ENCODE measurements at regions of chr18 and their contacts with region 1.

Region 1: GRCh38 chr18:24514439-24514838 is 54.0 kb downstream of the HRH4 start:
- DNase-seq: peak; percentile 44
- CTCF ChIP-seq: peak; percentile 50

Region 2: GRCh38 chr18:24502644-24503523 is 11.6 kb before region 1 on chr18:
- CTCF ChIA-PET with region 1: interaction called, 33 read pairs
- POLR2A ChIA-PET with region 1: no interaction called
- DNase-seq: no peak
- CTCF ChIP-seq: no peak

Region 3: DNA sequence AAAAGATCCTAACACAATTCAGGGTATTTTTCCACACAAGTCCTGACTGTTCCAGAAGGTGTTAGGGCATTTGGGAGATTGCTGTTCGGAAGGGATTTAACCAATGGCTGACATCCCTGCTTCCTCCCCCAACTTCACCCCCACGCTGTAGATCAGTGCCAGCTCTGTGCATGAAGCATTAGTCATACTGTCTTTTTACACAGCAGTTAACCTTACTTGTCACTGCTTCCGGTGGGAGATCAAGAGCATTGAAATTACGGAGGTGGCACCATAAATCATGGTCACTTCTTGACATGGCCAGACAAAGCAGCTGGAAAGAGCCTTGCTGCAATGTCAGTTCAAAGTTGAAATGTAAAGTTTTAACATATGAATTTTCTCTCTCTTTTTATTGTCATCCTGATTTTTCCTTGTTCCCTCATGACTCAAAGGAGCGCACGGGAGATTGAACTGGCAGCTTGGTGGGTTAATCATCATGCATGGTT is 16.2 kb after region 1 on chr18:
- CTCF ChIA-PET with region 1: interaction called, 16 read pairs
- POLR2A ChIA-PET with region 1: no interaction called
- DNase-seq: no peak
- CTCF ChIP-seq: no peak

Region 4: DNA sequence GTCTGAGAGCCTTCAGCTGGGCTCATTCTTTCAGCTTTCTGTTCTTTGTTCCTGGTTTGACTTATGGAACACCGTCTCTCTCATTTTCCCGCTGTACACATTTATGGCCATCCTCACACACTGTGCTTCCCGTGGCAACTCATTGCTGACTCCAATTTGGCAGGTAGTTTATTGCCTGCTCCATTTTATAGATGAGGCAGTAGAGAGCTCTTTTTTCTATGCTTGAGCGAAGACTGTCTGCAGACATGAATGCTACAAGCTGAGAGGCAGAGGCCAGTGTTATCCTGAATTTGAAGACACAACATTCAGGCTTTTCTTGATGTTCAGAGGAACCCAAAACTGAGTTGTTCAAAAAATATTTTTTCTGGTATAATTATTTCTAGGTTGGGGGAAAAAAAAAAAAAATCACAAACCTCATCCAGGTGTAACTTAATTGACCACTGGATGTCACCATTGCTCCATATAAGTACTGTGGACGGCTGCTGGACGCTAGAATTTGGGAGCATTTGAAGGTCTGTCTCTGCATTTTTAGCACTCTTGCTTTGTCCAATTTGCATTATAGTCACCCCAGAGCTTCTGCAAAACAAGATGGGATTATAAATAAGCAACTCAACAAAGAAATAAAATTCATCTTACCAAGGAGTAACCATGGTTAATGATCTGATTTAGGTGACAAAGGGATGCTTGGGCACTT is 29.5 kb after region 1 on chr18:
- CTCF ChIA-PET with region 1: interaction called, 12 read pairs
- POLR2A ChIA-PET with region 1: no interaction called
- DNase-seq: no peak
- CTCF ChIP-seq: no peak

Measured in GM10248 (cell line).